Activated CD8-positive, alpha-beta T cell treated with anti-CD3 and anti-CD28 coated beads, Interleukin-2, amount 10 ng/mL, durations not matched to agents 7 days and 5 days (primary cell): ENCODE measurements at regions of chr1 and their contacts with region 1.

Region 1: GRCh38 chr1:41791667-41792484 is 126.8 kb downstream of the HIVEP3 start:
- DNase-seq: peak; percentile 68
- ATAC-seq: peak; percentile 78
- H3K4me3 Mint-ChIP-seq: peak overlapping the region; percentile 42
- H3K27ac Mint-ChIP-seq: peak overlapping the region; percentile 95
- H3K4me1 Mint-ChIP-seq: peaks cover 56% of the 10 kb centered on the region
- H3K27me3 Mint-ChIP-seq: no peaks in the 10 kb centered on the region

Region 2: DNA sequence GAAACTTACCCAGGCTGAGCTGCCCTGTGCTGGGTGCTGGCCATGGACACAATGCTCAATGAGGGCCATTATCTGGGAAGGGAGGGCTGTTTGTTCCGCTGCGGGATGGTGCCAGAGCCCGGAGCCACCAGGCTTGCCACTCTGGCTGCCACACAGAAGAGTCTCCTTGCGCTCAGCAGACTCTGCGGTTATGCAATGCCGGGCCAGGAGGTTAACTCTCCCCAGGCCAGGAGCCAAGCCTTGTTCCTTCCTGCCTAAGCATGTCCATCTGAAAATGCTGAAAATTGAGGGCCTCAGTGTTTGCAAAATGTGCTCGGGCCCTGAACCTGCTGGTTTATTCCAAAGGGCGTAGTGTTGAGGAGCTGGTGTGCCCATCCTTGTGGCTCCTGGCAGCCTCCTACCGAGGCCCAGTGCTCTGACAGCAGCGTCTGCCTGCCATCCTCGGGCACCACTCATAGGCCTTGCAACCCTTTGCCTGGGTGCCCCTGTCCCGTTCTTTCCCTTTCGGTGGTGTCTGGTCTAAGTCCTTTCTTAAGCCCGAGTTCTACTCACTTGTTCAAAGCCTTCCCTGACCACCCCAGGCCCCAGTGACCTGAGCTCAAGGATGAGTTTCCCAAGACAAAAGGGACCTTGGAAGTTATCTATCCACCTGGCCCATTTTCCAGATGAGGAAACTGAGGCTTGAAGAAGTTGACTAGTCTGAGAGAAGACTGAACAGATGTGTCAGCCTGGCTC is 173.6 kb before region 1 on chr1:
- CTCF ChIA-PET with region 1: no interaction called
- POLR2A ChIA-PET with region 1: no interaction called
- DNase-seq: no peak
- ATAC-seq: no peak
- H3K4me3 Mint-ChIP-seq: no peak overlapping the region
- H3K27ac Mint-ChIP-seq: no peak overlapping the region
- H3K4me1 Mint-ChIP-seq: peaks cover 26% of the 10 kb centered on the region
- H3K27me3 Mint-ChIP-seq: no peaks in the 10 kb centered on the region

Region 3: DNA sequence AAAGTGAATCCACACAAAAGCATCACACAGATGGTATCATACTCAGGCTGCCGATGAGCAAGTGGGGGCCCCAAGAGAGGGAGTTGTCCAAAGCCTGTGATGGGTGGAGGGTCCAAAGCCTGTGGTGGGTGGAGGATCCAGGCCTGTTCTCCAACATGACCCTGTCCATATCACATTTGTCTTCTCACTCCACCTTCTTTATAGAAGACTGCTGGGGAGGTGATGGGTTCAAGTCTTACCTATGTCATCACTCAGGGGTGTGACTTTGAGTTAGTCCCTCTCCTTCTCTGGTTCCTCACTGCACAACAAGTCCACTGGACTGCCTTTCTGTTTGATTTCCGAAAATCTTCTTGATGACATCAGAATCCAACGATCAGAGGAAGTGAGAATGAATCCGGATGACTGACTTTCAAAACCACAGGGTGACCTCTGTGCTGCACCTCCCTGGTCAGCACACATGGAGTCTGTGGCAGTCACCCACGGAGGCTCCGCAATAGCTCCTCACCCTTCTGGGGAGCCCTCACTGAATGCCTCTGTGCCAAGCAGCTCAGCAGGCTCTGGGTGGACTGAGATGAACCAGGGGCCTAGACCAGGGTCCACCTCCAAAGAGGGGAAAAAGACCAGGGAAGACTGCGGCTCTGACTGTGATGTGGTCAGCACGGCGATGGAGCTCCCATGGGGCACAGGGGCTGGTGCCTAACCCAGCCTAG is 39.9 kb before region 1 on chr1:
- CTCF ChIA-PET with region 1: interaction called, 11 read pairs
- POLR2A ChIA-PET with region 1: interaction called, 3 read pairs
- DNase-seq: no peak
- ATAC-seq: no peak
- H3K4me3 Mint-ChIP-seq: no peak overlapping the region
- H3K27ac Mint-ChIP-seq: peak overlapping the region; percentile 83
- H3K4me1 Mint-ChIP-seq: peaks cover 67% of the 10 kb centered on the region
- H3K27me3 Mint-ChIP-seq: no peaks in the 10 kb centered on the region

Region 4: DNA sequence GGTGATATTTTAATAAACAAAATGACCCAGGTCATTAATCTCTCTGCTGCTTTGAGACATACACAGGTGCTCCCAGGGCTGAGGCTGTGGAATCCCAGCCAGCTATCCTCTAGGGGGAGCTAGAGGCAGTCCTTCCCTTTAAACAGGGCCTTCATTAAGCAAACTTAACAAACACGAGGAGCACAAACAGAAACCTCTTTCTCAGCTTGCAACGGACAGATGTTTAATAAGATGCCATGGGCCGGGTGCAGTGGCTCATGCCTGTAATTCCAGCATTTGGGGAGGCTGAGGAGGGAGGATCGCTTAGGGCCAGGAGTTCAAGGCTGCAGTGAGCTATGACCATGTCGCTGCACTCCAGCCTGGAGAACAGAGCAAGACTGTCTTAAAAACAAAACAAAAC is 20.2 kb after region 1 on chr1:
- CTCF ChIA-PET with region 1: interaction called, 14 read pairs
- POLR2A ChIA-PET with region 1: interaction called, 6 read pairs
- DNase-seq: peak; percentile 75
- ATAC-seq: peak; percentile 50
- H3K4me3 Mint-ChIP-seq: no peak overlapping the region
- H3K27ac Mint-ChIP-seq: peak overlapping the region; percentile 1
- H3K4me1 Mint-ChIP-seq: peaks cover 41% of the 10 kb centered on the region
- H3K27me3 Mint-ChIP-seq: peaks cover under 1% of the 10 kb centered on the region